Gastrocnemius medialis (tissue), 4 donors: ENCODE measurements at regions of chr6 and their contacts with region 1.

Region 1: DNA sequence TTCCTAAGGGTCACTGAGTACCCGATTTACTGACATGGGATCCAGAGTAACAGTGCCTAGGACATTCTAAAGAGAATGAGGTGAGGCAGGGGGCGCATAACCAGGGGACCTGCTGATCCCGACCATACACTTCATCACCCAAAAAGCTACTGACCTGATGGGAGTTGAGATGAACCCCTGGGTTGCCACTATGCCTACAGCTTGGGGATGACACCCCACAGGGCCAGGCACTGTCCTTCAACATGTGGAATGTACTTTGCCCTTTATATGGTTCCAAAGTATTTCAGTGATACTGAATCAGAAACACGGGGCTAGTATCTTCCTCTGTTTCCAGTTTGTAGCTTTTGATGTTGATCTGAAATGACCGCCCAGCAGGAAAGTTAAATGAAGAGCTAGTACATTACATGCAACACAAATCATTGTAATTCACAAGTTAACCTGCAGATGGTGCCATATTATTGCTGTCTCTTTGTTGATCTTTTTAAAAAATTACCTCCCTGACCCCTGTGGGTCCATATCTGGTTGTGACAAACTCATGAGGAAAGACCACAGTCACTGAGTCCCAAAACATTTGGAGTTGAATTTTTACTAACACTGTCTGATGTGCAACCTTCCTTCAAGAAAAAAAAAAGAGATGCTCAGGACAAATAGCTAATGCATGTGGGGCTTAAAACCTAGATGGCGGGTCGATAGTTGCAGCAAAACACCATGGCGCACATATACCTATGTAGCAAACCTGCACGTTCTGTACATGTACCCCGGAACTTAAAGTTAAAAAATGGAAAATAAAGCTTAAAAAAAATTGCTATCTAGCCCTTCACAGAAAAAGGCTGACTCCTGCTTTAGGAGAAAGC is 42.7 kb upstream of the GCNT2 start:
- DNase-seq: no peak
- ATAC-seq: no peak
- H3K4me3 ChIP-seq: no peak overlapping the region
- H3K27ac ChIP-seq: no peak overlapping the region
- H3K4me1 ChIP-seq: no peaks in the 10 kb centered on the region
- H3K27me3 ChIP-seq: no peaks in the 10 kb centered on the region
- CTCF ChIP-seq: peak in 3 of 5 experiments; percentile 31 to 41 (median 41)
- POLR2A ChIP-seq: no peak

Region 2: DNA sequence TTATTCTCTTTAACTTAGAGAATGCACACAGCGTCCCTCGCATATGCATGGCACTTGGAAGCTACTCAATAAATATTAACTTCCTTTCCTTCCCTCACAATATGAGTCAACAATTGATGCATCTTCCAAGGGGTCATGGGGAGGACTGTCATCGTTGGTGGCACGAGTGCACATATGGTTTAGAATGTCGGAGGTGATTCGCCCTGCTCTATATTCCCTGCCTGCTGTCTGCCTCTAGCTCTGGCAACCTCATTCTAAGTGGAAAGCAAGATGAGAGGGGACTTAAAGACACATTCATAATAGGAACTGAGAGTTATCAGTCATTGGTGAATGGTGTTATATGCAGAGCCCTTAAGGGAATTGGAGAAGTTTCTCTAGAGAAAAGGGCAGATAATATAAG is 315.3 kb after region 1 on chr6:
- in situ Hi-C with region 1: loop called in 1 of 4 experiments (anchors 25 kb)
- intact Hi-C with region 1: no loop called
- DNase-seq: no peak
- ATAC-seq: no peak
- H3K4me3 ChIP-seq: no peak overlapping the region
- H3K27ac ChIP-seq: no peak overlapping the region
- H3K4me1 ChIP-seq: no peaks in the 10 kb centered on the region
- H3K27me3 ChIP-seq: no peaks in the 10 kb centered on the region
- CTCF ChIP-seq: no peak
- POLR2A ChIP-seq: no peak

Region 3: GRCh38 chr6:10800829-10801535 is 322.6 kb after region 1 on chr6:
- in situ Hi-C with region 1: loop called in 1 of 4 experiments (anchors 25 kb)
- intact Hi-C with region 1: loop called (anchors 1 kb)
- DNase-seq: peak in 1 of 2 donors; percentile 28
- ATAC-seq: peak in 1 of 2 donors; percentile 76
- H3K4me3 ChIP-seq: no peak overlapping the region
- H3K27ac ChIP-seq: no peak overlapping the region
- H3K4me1 ChIP-seq: no peaks in the 10 kb centered on the region
- H3K27me3 ChIP-seq: no peaks in the 10 kb centered on the region
- CTCF ChIP-seq: peak; percentile 70 to 98 (median 81)
- POLR2A ChIP-seq: no peak

Region 4: DNA sequence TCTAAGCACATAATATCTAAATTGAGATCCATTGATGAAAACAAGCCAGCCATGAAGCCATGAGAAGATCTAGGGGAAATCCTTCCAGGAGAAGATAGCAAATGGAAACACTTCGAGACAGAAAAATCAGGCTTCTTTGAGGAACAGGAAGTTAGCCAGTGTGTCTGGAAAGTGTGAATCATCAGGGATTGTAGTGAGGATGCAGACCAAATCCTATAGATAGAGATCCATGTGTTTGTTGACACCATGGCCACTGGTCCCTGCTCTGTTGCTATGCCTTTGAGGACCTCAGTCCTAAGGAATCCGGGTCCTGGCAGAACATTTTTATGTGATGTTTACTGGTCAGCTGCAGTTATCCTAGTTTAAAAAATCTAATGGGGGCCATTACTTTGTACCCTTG is 572.3 kb after region 1 on chr6:
- in situ Hi-C with region 1: loop called in 1 of 4 experiments (anchors 25 kb)
- intact Hi-C with region 1: no loop called
- DNase-seq: no peak
- ATAC-seq: no peak
- H3K4me3 ChIP-seq: no peak overlapping the region
- H3K27ac ChIP-seq: no peak overlapping the region
- H3K4me1 ChIP-seq: no peaks in the 10 kb centered on the region
- H3K27me3 ChIP-seq: peaks cover 21 to 29% (median 24%) of the 10 kb centered on the region in 3 donors
- CTCF ChIP-seq: no peak
- POLR2A ChIP-seq: no peak